Activated naive CD8-positive, alpha-beta T cell treated with anti-CD3 and anti-CD28 coated beads, Interleukin-2, amount 10 ng/mL, durations not matched to agents 7 days and 5 days (primary cell): ENCODE measurements at regions of chr2 and their contacts with region 1.

Region 1: GRCh38 chr2:201071479-201072200 is at the starts of genes HYCC2 and NDUFB3:
- DNase-seq: peak; percentile 88
- ATAC-seq: peak; percentile 97
- H3K4me3 Mint-ChIP-seq: peak within 1 kb of the TSS; percentile 90
- H3K27ac Mint-ChIP-seq: peak within 1 kb of the TSS; percentile 87
- H3K4me1 Mint-ChIP-seq: peaks cover 32% of the 10 kb centered on the region
- H3K27me3 Mint-ChIP-seq: no peaks in the 10 kb centered on the region
- total RNA-seq, gene HYCC2: 37.0 to 40.5 TPM
- total RNA-seq, gene NDUFB3: 115 to 116 TPM

Region 2: DNA sequence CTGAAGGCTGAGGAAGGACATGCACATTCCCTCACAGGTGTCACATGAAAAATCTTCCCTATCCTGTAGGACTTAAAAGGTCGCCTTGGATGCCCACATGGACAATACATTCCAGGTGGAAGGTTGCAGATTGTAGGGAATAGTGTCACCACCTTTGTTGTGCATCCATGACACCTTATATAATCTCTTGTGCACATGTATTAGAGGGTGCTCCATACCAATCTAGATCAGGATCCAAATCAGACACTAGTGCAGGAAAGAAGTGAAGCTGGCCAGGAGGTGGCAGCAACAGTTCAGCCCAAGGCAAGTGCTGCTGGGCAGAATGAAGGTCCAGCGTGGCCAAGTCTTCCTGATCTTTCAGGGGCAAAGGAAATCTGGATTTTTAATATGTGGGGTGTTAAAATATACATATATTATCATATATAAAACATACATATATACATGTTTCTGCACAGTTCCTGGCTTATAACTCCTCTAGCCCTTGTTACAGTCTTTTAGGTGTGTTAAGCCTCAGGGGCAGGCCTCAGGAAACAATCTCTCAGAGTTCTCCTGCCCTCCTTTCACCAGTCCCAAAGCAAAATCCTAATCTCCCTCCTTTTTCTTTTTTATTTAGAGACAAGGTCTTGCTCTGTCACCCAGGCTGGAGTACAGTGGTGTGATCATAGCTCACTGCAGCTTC is 165.9 kb before region 1 on chr2:
- POLR2A ChIA-PET with region 1: interaction called, 24 read pairs
- DNase-seq: peak; percentile 60
- ATAC-seq: peak; percentile 55
- H3K4me3 Mint-ChIP-seq: no peak overlapping the region
- H3K27ac Mint-ChIP-seq: peak overlapping the region; percentile 68
- H3K4me1 Mint-ChIP-seq: peaks cover 8% of the 10 kb centered on the region
- H3K27me3 Mint-ChIP-seq: no peaks in the 10 kb centered on the region

Region 3: DNA sequence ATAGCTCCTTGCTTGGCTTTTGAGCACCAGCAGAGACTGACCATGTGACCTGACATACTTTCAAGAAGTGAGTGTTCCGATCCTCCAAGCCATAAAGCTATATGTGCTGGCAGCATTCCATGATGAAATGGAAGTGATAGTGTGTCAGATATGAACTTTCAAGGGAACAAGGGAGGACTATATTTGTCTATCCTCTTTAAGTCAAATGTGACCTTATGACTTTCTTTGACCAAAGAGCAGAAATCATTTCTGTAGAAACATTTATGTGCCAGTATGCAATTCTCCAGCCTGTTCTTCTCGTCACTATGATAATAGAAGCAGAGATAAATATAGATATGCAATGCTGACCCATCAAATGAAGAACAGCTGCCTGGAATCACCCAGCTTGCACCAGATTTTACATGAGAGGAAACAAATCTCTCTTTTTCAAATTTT is 14.5 kb before region 1 on chr2:
- POLR2A ChIA-PET with region 1: no interaction called
- DNase-seq: no peak
- ATAC-seq: no peak
- H3K4me3 Mint-ChIP-seq: no peak overlapping the region
- H3K27ac Mint-ChIP-seq: no peak overlapping the region
- H3K4me1 Mint-ChIP-seq: peaks cover 17% of the 10 kb centered on the region
- H3K27me3 Mint-ChIP-seq: no peaks in the 10 kb centered on the region

Region 4: DNA sequence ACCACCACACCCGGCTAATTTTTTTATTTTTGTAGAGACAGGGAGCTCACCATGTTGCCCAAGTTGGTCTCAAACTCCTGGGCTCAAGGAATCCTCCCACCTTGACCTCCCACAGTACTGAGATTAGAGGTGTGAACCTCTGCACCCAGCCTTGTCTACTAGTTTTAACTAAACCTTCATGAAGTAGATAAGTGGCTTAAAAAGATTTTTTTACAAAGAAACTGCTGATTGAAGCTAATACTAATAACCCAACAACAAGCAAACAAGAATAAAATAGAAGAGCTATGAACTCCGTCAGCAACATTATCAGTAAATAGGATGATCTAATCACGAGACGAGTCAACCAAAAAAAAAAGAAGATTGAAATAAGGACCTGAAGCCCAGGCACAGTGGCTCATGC is 18.9 kb after region 1 on chr2:
- POLR2A ChIA-PET with region 1: no interaction called
- DNase-seq: no peak
- ATAC-seq: no peak
- H3K4me3 Mint-ChIP-seq: no peak overlapping the region
- H3K27ac Mint-ChIP-seq: no peak overlapping the region
- H3K4me1 Mint-ChIP-seq: no peaks in the 10 kb centered on the region
- H3K27me3 Mint-ChIP-seq: no peaks in the 10 kb centered on the region

Region 5: DNA sequence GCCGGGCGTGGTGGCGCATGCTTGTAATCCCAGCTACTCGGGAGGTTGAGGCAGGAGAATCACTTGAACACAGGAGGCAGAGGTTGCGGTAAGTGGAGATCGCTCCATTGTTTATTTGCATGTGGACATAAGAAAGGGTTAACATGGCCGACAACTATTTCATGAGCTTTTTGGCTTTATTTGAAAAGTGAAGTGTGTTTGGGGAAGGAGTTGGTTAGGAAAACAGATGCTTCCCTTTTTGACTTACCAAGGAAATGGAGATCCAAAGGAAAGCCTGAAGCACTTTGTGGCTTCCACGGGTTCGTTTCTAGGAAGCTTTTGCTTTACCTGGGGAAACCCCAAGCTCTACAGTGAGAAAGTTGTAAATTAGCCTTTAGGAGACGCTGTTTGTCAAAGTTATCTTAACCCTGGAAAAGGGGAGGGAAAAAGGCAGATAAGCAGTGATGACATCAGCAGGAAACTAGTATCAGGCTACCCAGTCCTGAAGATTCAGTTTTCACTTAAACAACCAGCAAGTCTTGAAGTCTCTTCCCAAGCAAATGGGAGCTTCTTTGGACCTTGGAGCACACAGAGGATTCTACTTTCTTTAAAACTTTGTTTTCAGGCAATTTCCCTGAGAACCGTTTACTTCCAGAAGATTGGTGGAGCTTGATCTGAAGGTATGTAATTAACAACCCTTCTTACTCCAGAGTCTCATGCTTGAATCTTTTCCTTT is 111.2 kb after region 1 on chr2 and contains the start of gene CASP10:
- POLR2A ChIA-PET with region 1: no interaction called
- DNase-seq: no peak
- ATAC-seq: peak; percentile 78
- H3K4me3 Mint-ChIP-seq: peak within 1 kb of the TSS; percentile 96
- H3K27ac Mint-ChIP-seq: peak within 1 kb of the TSS; percentile 92
- H3K4me1 Mint-ChIP-seq: peaks cover 41% of the 10 kb centered on the region
- H3K27me3 Mint-ChIP-seq: no peaks in the 10 kb centered on the region
- total RNA-seq, gene CASP10: 45.2 to 46.1 TPM